A673 (cell line): ENCODE measurements at regions of chr2 and their contacts with region 1.

Region 1: GRCh38 chr2:206004004-206004693 is 81.8 kb downstream of the INO80D start:
- DNase-seq: peak; percentile 46
- H3K4me3 ChIP-seq: no peak overlapping the region
- H3K27ac ChIP-seq: no peak overlapping the region
- H3K4me1 ChIP-seq: peaks cover 30% of the 10 kb centered on the region
- H3K27me3 ChIP-seq: no peaks in the 10 kb centered on the region
- CTCF ChIP-seq: peak; percentile 61

Region 2: GRCh38 chr2:206023183-206023582 is 19.0 kb after region 1 on chr2:
- CTCF ChIA-PET with region 1: no interaction called
- POLR2A ChIA-PET with region 1: interaction called, 10 read pairs
- intact Hi-C with region 1: no loop called
- DNase-seq: no peak
- H3K4me3 ChIP-seq: no peak overlapping the region
- H3K27ac ChIP-seq: no peak overlapping the region
- H3K4me1 ChIP-seq: no peaks in the 10 kb centered on the region
- H3K27me3 ChIP-seq: no peaks in the 10 kb centered on the region
- CTCF ChIP-seq: no peak

Region 3: DNA sequence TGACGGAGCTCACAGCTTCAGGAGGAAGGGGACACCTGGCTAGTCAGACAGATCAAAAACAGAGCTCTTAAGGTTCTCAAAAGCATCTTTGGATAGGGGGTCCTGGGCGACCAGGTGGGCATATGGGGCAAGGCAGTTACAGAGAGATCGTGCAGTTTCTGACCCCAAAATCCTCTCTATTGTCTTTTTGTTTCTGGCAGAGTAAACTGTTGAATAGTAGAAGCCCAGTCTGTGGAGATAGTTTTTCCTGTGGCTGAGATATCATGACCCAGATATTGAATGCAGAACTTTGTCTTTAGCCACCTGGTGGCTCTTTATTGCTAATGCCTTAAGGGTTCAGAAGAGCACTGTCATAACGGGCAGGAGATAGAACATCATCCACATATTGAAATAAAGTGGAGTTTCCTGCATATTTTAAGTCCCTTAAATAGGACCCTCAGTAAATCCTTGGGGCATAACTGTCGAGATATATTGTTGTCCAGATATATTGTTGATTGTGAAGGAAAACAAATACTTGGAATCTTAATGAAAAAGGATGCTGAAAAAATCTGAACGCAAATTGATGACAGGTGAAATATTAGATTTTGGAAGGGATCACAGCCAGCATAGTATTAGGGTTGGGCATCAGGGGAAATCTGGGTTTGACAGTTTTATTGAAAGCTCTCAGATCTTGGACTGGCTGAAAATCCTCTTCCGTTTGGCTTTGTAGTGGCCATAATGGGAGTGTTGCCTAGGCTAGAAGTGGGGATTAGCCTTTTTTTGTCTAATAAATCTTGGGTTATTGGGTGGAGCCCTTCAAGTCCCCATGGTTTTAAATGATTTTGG is 256.3 kb after region 1 on chr2:
- CTCF ChIA-PET with region 1: no interaction called
- POLR2A ChIA-PET with region 1: no interaction called
- intact Hi-C with region 1: no loop called
- DNase-seq: peak; percentile 31
- H3K4me3 ChIP-seq: no peak overlapping the region
- H3K27ac ChIP-seq: no peak overlapping the region
- H3K4me1 ChIP-seq: no peaks in the 10 kb centered on the region
- H3K27me3 ChIP-seq: peaks cover 92% of the 10 kb centered on the region
- CTCF ChIP-seq: peak; percentile 45; the same call in 1 of the 2 replicates

Region 4: GRCh38 chr2:206457188-206457634 is 453.1 kb after region 1 on chr2:
- CTCF ChIA-PET with region 1: no interaction called
- POLR2A ChIA-PET with region 1: no interaction called
- intact Hi-C with region 1: no loop called
- DNase-seq: no peak
- H3K4me3 ChIP-seq: no peak overlapping the region
- H3K27ac ChIP-seq: no peak overlapping the region
- H3K4me1 ChIP-seq: no peaks in the 10 kb centered on the region
- H3K27me3 ChIP-seq: peaks cover 53% of the 10 kb centered on the region
- CTCF ChIP-seq: no peak